ENCODE measurements at regions of chr1 and their contacts with region 1.

Region 1: DNA sequence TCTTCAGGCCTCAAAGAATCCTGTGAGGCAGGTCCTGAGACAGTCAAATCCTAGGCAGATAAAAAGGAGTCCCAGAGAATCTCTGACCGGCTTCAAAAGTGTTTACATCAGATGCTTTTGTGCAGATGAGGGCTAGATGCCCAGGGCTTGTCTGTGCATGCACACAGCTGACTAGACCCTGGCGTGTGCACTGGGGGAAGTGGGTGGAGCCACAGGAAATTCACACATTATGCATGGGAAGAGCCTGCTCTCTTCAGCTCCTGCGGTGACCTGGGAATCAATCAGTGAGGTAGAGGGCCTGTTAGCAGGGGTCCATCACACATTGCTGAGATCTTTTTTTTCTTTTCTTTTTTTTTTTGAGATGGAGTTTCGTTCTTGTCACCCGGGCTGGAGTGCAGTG is 36.6 kb upstream of the NHLH2 start:
- DNase-seq: no peak
- ATAC-seq: no peak

Region 2: GRCh38 chr1:114997510-114998289 is 879.8 kb before region 1 on chr1:
- intact Hi-C with region 1: loop called (anchors 5 kb)
- DNase-seq: no peak
- ATAC-seq: no peak

Region 3: GRCh38 chr1:115506926-115507589 is 370.5 kb before region 1 on chr1:
- intact Hi-C with region 1: no loop called
- DNase-seq: no peak
- ATAC-seq: peak; percentile 72

Region 4: GRCh38 chr1:115933625-115934024 is 56.1 kb after region 1 on chr1:
- intact Hi-C with region 1: no loop called
- DNase-seq: no peak
- ATAC-seq: no peak